Activated CD4-positive, alpha-beta T cell treated with anti-CD3 and anti-CD28 coated beads for 36 hours (primary cell): ENCODE measurements at regions of chr15 and their contacts with region 1.

Region 1: DNA sequence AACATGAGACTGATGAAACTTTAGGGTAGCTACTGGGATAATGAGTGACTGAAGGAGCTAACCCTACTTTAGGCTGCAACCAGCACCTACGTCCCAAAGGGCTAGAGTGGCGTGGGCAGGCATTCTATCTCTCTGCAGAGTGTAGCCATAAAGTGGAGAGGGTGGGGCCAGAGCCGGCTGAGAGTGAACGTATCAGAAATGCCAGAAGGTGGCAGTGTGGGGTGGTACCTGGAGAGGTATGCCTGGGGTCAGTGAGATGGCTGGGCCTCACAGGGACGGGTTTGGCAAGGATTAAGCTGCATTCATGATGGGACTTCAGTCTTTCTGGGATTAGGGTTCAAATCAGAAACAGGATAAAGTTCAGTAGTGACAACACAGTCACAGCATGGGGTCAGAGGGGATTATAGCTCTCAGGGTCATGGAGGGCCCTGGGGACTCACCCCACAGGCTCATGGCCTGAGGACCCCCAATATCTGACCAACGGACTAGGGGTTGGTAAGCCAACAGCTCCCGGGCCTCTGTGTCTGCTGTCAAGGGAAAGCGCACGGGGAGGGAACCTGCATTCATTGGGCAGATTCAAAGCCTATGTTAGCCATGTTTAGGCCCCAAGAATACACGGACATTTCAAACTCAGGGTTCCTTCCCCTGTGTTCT is 86.5 kb upstream of the FOXB1 start:
- DNase-seq: peak; percentile 87
- ATAC-seq: peak; percentile 61
- H3K4me3 Mint-ChIP-seq: no peak overlapping the region
- H3K27ac Mint-ChIP-seq: peak overlapping the region; percentile 58
- H3K4me1 Mint-ChIP-seq: peaks cover 28% of the 10 kb centered on the region
- H3K27me3 Mint-ChIP-seq: peaks cover 11% of the 10 kb centered on the region

Region 2: GRCh38 chr15:59688841-59689625 is 228.6 kb before region 1 on chr15 and contains the start of gene BNIP2:
- CTCF ChIA-PET with region 1: interaction called, 5 read pairs
- POLR2A ChIA-PET with region 1: no interaction called
- intact Hi-C with region 1: loop called (anchors 1 kb)
- DNase-seq: peak; percentile 99
- ATAC-seq: peak; percentile 87
- H3K4me3 Mint-ChIP-seq: peak within 1 kb of the TSS; percentile 80
- H3K27ac Mint-ChIP-seq: peak within 1 kb of the TSS; percentile 98
- H3K4me1 Mint-ChIP-seq: peaks cover 41% of the 10 kb centered on the region
- H3K27me3 Mint-ChIP-seq: no peaks in the 10 kb centered on the region
- total RNA-seq, gene BNIP2: 51.9 to 61.5 TPM

Region 3: DNA sequence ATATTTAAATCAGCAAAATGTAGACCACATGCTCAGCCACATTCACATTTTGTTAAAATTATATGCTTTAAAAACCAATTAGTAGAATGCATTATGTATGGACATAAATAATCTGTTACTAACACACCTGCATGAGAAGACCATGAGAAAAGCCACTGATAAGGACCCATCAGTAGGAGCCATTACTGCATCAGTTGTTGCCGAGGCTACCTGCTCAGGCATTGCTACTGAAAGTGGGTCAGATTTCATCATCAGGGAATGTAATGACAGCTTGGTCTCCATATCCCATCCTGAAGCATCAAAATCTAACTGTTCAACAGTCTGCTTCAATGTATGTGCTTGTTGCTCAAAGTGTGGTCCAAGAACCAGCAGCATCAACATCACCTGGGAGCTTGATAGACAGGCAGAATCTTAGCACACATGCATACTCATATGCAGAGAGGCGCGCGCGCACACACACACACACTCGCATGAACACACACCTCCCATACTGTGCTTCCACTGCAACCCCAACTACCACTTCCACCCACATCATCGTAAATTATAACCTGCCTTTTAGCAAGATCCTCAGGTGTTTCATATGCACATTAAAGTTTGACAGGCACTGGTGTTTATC is 14.1 kb after region 1 on chr15:
- CTCF ChIA-PET with region 1: interaction called, 11 read pairs
- POLR2A ChIA-PET with region 1: no interaction called
- intact Hi-C with region 1: no loop called
- DNase-seq: peak; percentile 29
- ATAC-seq: no peak
- H3K4me3 Mint-ChIP-seq: no peak overlapping the region
- H3K27ac Mint-ChIP-seq: no peak overlapping the region
- H3K4me1 Mint-ChIP-seq: no peaks in the 10 kb centered on the region
- H3K27me3 Mint-ChIP-seq: peaks cover 17% of the 10 kb centered on the region

Region 4: DNA sequence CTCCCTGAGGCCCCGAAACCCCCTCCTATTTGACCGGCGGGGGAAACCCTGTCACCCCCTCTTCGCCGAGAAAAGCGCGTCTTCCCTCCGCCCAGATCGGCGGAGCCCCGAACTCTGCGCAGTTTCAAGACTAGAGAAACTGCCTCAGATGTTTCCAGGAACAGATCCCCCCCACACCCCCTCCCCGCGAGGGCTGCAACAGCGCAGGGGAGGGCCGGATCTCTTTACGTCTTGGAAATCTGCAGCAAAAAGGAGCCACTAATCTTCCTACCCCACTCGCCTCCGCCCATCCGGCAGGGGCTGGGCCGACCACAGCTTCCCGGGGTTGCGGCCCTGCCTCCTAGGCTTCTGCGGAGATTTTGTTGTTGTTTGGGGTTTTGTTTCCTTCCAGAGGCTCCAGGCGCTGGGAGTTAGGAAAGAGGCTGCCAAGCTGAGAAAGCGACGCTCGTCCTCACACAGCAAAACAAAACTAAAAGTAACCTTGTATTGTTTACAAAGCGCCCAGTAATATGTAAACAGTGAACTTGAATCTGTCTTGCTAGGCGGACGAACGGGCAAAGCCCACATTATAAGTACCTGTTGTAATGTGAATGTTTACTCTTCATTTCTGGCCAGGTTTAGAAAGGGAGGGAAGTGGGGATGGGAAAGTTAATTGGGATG is 88.7 kb after region 1 on chr15:
- CTCF ChIA-PET with region 1: interaction called, 6 read pairs
- POLR2A ChIA-PET with region 1: no interaction called
- intact Hi-C with region 1: loop called in 1 of 2 experiments (anchors 1 kb)
- DNase-seq: peak; percentile 84
- ATAC-seq: peak; percentile 73
- H3K4me3 Mint-ChIP-seq: peak overlapping the region; percentile 81
- H3K27ac Mint-ChIP-seq: peak overlapping the region; percentile 88
- H3K4me1 Mint-ChIP-seq: peaks cover 37% of the 10 kb centered on the region
- H3K27me3 Mint-ChIP-seq: peaks cover 84% of the 10 kb centered on the region

Region 5: GRCh38 chr15:60128000-60128376 is 210.4 kb after region 1 on chr15:
- CTCF ChIA-PET with region 1: interaction called, 3 read pairs
- POLR2A ChIA-PET with region 1: no interaction called
- intact Hi-C with region 1: loop called (anchors 1 to 5 kb)
- DNase-seq: no peak
- ATAC-seq: no peak
- H3K4me3 Mint-ChIP-seq: peak overlapping the region; percentile 70
- H3K27ac Mint-ChIP-seq: peak overlapping the region; percentile 85
- H3K4me1 Mint-ChIP-seq: peaks cover 54% of the 10 kb centered on the region
- H3K27me3 Mint-ChIP-seq: no peaks in the 10 kb centered on the region

Region 6: DNA sequence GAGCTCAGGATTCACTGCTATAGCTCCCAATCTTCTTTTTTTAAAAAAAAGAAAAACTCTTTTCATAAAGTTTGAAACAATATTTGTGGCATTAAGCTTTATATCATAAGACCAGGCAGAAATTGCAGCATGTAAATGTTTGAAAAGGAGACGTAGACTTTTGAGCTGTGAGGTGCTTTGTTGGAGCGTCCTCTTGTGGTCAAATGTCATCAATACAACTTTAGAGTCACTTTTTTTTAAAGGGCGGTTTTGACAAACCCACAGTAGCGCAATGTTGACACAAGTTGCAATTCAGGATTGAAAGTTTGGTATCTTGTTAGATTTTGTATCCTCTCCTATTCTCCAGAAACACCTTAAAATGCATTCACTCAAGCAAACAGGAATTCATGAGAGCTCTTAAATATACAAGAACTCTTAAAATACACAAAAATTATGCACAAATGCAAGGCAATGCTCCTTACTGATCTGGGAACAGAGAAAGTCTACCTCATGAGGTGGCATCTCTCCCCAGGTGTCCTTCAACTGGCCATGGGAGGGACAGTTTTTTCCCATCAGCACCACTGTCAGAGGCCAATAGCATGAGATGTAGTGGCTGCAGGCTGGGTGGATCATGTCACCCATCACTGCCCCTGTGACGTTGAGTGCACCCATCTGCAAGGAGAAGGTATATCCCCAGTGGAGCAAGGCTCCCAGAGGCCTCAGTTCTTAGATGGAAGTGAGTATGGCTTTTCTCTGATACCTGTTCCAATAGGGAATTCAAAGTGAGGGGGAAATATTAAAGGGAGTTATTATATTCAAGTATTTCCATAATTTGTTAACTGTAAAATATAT is 409.4 kb after region 1 on chr15:
- CTCF ChIA-PET with region 1: interaction called, 39 read pairs
- POLR2A ChIA-PET with region 1: no interaction called
- intact Hi-C with region 1: loop called (anchors 1 to 2 kb)
- DNase-seq: peak; percentile 52
- ATAC-seq: no peak
- H3K4me3 Mint-ChIP-seq: no peak overlapping the region
- H3K27ac Mint-ChIP-seq: no peak overlapping the region
- H3K4me1 Mint-ChIP-seq: peaks cover 2% of the 10 kb centered on the region
- H3K27me3 Mint-ChIP-seq: peaks cover 31% of the 10 kb centered on the region

Region 7: GRCh38 chr15:60469893-60470641 is 552.4 kb after region 1 on chr15:
- CTCF ChIA-PET with region 1: no interaction called
- POLR2A ChIA-PET with region 1: no interaction called
- intact Hi-C with region 1: no loop called
- DNase-seq: no peak
- ATAC-seq: no peak
- H3K4me3 Mint-ChIP-seq: no peak overlapping the region
- H3K27ac Mint-ChIP-seq: no peak overlapping the region
- H3K4me1 Mint-ChIP-seq: peaks cover 21% of the 10 kb centered on the region
- H3K27me3 Mint-ChIP-seq: no peaks in the 10 kb centered on the region

Region 8: GRCh38 chr15:61011576-61012336 is 1094.1 kb after region 1 on chr15:
- CTCF ChIA-PET with region 1: no interaction called
- POLR2A ChIA-PET with region 1: no interaction called
- intact Hi-C with region 1: no loop called
- DNase-seq: no peak
- ATAC-seq: no peak
- H3K4me3 Mint-ChIP-seq: no peak overlapping the region
- H3K27ac Mint-ChIP-seq: no peak overlapping the region
- H3K4me1 Mint-ChIP-seq: no peaks in the 10 kb centered on the region
- H3K27me3 Mint-ChIP-seq: peaks cover 28% of the 10 kb centered on the region